ENCODE measurements at regions of chr5 and their contacts with region 1.

Region 1: GRCh38 chr5:58460732-58461286 is 923 bp upstream of the PLK2 start:
- DNase-seq: peak; percentile 97
- H3K4me3 ChIP-seq: peak overlapping the region; percentile 69 to 84 (median 72)
- H3K27ac ChIP-seq: peak overlapping the region; percentile 93 to 98 (median 94)
- H3K4me1 ChIP-seq: peaks cover 0 to 16% (median 10%) of the 10 kb centered on the region in 4 donors
- H3K27me3 ChIP-seq: peaks cover 0 to 5% (median 0%) of the 10 kb centered on the region in 4 donors
- CTCF ChIP-seq: peak; percentile 70 to 84 (median 81)
- EP300 ChIP-seq: no peak
- POLR2A ChIP-seq: no peak

Region 2: DNA sequence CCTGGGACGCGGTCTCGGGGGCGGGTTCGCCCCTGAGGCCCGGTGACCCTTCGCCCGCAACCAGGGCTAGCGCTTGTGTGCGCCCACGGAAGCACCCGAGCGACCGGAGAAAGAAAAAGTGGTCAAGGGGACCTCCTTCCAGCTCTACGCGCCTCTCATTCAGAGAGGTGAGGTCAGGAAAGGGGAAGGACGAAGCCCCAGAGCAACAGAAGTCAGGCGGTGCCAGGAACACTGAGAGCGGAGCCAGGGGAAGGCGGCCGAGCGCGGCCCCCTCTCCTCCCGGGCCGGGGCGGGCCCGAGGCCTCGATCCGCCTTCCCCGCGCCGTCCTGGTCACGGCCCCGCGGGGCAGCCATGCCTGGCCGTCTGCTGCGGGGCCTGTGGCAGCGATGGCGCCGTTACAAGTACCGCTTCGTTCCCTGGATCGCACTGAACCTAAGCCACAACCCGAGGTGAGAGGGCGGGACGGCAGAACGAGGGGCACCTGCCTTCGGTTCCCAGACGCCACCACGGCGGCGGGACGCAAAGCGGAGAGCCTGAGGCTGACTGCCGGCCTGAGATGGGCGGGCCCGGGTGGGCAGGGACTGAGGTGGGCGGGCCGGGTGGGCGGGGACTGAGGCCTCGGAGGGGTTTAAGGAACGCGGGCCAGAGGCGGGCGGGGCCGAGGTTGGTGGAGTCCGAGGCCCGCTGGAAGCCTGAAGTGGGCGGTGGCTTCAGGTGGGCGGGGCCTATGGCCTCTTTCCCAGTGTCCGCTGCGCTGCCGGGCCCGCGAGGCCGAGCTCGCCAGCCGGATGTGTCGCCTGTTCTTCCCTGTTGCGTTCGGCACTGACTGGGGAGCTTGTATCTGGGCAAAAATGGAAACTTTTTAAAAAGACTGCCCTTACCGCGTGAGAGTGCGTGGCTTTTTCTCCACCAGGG is 1551.3 kb before region 1 on chr5 and contains the start of gene SETD9:
- intact Hi-C with region 1: loop called (anchors 10 kb)
- DNase-seq: peak; percentile 99
- H3K4me3 ChIP-seq: peak within 1 kb of the TSS; percentile 67 to 77 (median 73)
- H3K27ac ChIP-seq: peak within 1 kb of the TSS; percentile 88 to 96 (median 94)
- H3K4me1 ChIP-seq: peaks cover 7 to 15% (median 11%) of the 10 kb centered on the region in 4 donors
- H3K27me3 ChIP-seq: no peaks in the 10 kb centered on the region
- CTCF ChIP-seq: no peak
- EP300 ChIP-seq: no peak
- POLR2A ChIP-seq: peak; percentile 29
- total RNA-seq, gene SETD9: 5.0 to 20.8 (median 12.2) TPM

Region 3: DNA sequence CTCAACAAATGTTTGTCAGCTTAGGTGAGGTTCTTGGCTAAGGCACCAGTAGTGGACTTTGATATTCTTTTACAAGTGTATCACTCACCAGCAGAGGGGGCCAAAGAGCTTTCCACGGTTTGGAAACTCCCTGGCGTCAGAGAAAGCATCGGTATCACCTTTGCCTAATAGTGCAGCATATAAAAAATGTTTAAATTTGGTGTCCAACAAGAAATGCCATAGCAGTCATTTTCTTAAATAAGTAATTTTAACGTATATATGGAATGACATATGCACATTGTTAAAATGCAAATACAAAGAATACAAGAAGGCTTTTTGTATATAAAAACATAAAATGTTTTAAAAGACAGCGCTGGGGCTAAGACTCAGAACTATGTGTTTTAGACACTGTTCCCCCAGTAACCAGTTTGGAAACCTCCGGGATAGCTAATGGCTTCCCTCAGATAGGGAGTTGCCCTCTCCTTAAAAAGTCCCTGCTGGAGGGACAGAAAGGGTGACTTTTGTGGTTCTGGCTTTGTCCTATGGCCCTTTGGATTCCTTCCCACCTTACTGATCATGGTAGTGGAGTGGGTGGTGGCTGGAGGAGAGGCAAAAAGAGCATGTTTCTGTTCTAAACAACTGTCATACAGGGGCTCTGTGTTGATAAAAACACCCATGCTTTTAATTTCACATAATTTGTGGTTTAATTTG is 1162.4 kb before region 1 on chr5:
- intact Hi-C with region 1: loop called (anchors 2 kb)
- DNase-seq: peak; percentile 96
- H3K4me3 ChIP-seq: peak overlapping the region in 3 of 4 donors; percentile 23 to 44 (median 33)
- H3K27ac ChIP-seq: no peak overlapping the region
- H3K4me1 ChIP-seq: peaks cover 5 to 12% (median 10%) of the 10 kb centered on the region in 4 donors
- H3K27me3 ChIP-seq: no peaks in the 10 kb centered on the region
- CTCF ChIP-seq: peak; percentile 74 to 78 (median 77)
- EP300 ChIP-seq: no peak
- POLR2A ChIP-seq: no peak

Region 4: DNA sequence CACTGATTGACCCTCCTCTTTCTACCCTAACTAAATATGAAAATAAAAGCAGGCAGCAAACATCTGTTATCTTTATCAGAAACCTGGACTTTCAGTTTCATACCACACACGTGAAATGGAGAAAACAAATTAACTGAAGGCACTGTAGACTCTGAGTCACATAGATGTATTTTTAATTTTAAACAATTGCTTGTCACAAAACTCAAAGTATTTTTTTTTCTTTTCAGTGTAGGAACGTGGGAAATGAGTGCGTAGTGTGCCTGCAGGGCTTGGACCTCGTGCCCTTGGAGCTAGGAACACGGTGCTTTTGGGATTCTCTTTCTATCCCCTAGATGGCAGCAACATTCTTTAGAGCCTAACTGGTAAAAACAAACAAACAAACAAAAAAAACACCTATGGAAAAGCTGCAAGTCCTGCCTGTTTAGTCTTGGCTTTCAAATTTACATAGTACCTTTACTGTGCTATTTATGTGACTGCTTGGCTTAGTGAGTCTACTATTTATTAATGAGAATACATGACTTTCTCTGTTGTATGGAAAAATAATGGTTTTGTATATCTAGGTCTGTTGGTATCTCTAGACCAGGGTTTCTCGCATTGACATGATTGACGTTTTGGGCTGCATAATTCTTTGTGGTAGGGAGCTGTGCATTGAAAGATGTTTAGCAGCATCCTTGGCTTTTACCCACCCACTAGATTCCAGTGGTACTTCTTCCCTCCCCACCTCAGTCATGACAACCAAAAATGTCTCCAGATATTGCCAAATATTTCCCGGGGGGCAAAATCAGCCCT is 961.4 kb before region 1 on chr5:
- intact Hi-C with region 1: loop called (anchors 10 kb)
- DNase-seq: no peak
- H3K4me3 ChIP-seq: peak overlapping the region in 3 of 4 donors; percentile 1 to 38 (median 22)
- H3K27ac ChIP-seq: no peak overlapping the region
- H3K4me1 ChIP-seq: peaks cover 0 to 7% (median 0%) of the 10 kb centered on the region in 4 donors
- H3K27me3 ChIP-seq: no peaks in the 10 kb centered on the region
- CTCF ChIP-seq: peak in 2 of 3 experiments; percentile 39 to 61
- EP300 ChIP-seq: no peak
- POLR2A ChIP-seq: no peak

Region 5: DNA sequence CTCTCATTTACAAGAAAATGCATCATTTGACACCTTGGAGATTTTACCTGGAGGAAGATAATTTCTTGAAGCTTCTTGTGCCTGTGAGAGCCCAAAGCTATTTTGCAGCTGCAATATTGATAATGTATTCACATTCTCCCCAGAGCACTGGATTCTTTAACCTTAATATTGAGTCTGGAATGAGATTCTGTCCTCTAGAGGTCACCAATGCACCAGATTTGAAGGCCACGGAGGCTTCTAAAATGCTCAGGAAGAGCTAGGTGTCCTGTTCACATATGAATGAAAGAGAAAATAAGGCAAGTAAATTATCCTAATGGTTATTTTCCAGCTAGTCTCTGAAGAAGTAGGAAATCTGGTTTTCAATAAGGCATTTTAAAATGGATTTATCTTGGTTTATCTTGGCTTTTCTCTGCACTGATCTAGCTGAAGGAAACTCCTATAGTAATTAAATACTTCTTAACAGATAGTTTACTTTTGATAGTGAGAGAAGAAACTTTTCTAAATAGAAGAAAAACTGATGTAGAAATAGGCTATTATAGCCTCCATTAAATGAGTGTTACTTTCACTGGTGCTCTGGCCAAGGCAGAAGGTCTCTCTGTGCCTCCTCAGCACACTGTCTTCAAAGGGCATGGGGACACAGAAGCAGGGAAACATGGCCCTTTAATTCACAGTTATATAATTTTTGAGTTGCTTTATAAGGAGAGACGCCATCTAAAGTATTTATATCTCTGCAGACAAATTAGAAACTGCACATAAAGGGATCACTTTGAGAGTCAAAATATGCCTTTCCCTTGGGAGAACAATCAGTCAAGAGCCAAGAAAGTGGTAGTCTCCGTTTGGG is 681.2 kb before region 1 on chr5:
- intact Hi-C with region 1: loop called (anchors 1 kb)
- DNase-seq: no peak
- H3K4me3 ChIP-seq: no peak overlapping the region
- H3K27ac ChIP-seq: peak overlapping the region in 2 of 4 donors; percentile 10 to 22
- H3K4me1 ChIP-seq: peaks cover 11 to 14% (median 11%) of the 10 kb centered on the region in 4 donors
- H3K27me3 ChIP-seq: no peaks in the 10 kb centered on the region
- CTCF ChIP-seq: peak; percentile 59 to 64 (median 60)
- EP300 ChIP-seq: no peak
- POLR2A ChIP-seq: no peak

Region 6: DNA sequence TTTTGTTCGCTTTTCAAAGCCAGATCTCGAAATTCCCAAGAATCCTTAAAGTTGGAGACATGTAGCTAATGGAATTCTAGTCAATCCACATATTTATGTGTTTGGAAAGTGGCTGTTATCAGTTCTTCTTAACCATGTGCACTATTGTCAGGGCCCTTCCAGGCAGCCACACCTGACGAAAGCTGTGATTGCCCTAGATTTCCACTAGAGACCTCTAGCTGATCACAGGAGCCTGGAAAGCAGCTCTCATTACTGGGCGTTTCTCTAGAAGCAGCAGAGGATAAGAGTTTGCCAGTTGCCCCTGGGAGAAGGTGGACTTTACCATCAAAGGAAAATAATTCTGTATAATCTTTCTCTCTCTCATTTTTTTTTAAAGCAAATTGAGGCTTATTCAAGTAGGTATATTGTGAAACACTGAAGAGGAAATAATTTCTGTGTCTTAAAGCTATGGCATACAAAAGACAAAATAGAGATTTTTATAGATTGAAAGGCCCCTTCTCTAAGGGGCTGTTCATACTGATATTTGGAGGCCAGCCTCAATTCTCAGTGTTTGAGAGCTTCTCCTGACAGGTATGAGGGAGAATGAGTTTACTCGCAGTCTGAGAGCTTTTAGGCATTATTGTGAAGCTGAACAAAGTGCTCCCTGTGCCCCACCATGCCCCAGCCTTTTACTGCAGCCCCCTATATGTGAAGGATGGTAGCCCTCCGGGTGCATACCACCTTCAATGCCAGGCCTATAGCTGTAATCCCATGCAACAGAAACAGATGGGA is 572.8 kb before region 1 on chr5:
- intact Hi-C with region 1: loop called (anchors 5 kb)
- DNase-seq: no peak
- H3K4me3 ChIP-seq: no peak overlapping the region
- H3K27ac ChIP-seq: no peak overlapping the region
- H3K4me1 ChIP-seq: no peaks in the 10 kb centered on the region
- H3K27me3 ChIP-seq: no peaks in the 10 kb centered on the region
- CTCF ChIP-seq: peak in 2 of 3 experiments; percentile 25 to 44
- EP300 ChIP-seq: no peak
- POLR2A ChIP-seq: no peak

Measured in esophagus muscularis mucosa (tissue), 4 donors.